ENCODE measurements at regions of chr2 and their contacts with region 1.

Region 1: GRCh38 chr2:52558265-52558664 is 1209.3 kb upstream of the CHAC2 start:
- DNase-seq: no peak
- H3K4me3 ChIP-seq: no peak overlapping the region
- H3K27ac ChIP-seq: no peak overlapping the region
- H3K4me1 ChIP-seq: no peaks in the 10 kb centered on the region
- H3K27me3 ChIP-seq: no peaks in the 10 kb centered on the region
- CTCF ChIP-seq: no peak
- EP300 ChIP-seq: no peak
- POLR2A ChIP-seq: no peak

Region 2: DNA sequence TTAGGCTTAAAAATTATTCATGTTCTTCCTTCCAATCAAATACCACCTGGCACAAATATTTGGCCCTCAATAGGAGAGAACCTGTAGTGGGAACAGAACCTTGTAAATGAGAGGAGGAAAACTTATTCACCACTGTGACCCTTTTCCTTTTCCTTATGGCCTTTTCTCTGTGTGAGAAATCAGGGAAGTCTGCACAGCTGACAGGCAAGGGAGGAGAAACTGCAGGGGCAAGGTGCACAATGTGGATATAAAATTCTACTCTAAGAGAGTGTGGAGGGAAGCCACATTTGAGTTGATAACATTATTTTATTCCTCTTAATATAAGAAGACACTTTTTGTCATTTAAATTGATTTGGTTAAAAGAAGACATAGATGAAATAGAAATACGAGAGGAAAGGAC is 37.6 kb before region 1 on chr2:
- in situ Hi-C with region 1: loop called in 2 of 4 experiments (anchors 5 kb)
- intact Hi-C with region 1: no loop called
- DNase-seq: no peak
- H3K4me3 ChIP-seq: no peak overlapping the region
- H3K27ac ChIP-seq: no peak overlapping the region
- H3K4me1 ChIP-seq: no peaks in the 10 kb centered on the region
- H3K27me3 ChIP-seq: no peaks in the 10 kb centered on the region
- CTCF ChIP-seq: no peak
- EP300 ChIP-seq: no peak
- POLR2A ChIP-seq: no peak